Caco-2 (cell line): ENCODE measurements at regions of chr1 and their contacts with region 1.

Region 1: GRCh38 chr1:178310685-178311105 is 186.1 kb downstream of the CLEC20A start:
- DNase-seq: peak in 1 of 2 experiments; percentile 68
- H3K4me3 ChIP-seq: no peak overlapping the region
- H3K4me3 Mint-ChIP-seq: no peak overlapping the region
- H3K27ac Mint-ChIP-seq: peak overlapping the region; percentile 79
- H3K4me1 ChIP-seq: no peaks in the 10 kb centered on the region
- H3K4me1 Mint-ChIP-seq: peaks cover 28% of the 10 kb centered on the region
- H3K27me3 ChIP-seq: no peaks in the 10 kb centered on the region
- H3K27me3 Mint-ChIP-seq: no peaks in the 10 kb centered on the region
- CTCF ChIP-seq: peak; percentile 67 to 75

Region 2: GRCh38 chr1:178344513-178345082 is 33.9 kb after region 1 on chr1:
- CTCF ChIA-PET with region 1: interaction called, 9 read pairs
- POLR2A ChIA-PET with region 1: no interaction called
- intact Hi-C with region 1: loop called (anchors 2 kb)
- DNase-seq: peak in 1 of 2 experiments; percentile 19
- H3K4me3 ChIP-seq: no peak overlapping the region
- H3K4me3 Mint-ChIP-seq: no peak overlapping the region
- H3K27ac Mint-ChIP-seq: peak overlapping the region; percentile 79
- H3K4me1 ChIP-seq: peaks cover 30% of the 10 kb centered on the region
- H3K4me1 Mint-ChIP-seq: peaks cover 35% of the 10 kb centered on the region
- H3K27me3 ChIP-seq: no peaks in the 10 kb centered on the region
- H3K27me3 Mint-ChIP-seq: no peaks in the 10 kb centered on the region
- CTCF ChIP-seq: peak; percentile 25 to 29

Region 3: GRCh38 chr1:178354816-178355215 is 44.1 kb after region 1 on chr1:
- CTCF ChIA-PET with region 1: no interaction called
- POLR2A ChIA-PET with region 1: no interaction called
- intact Hi-C with region 1: no loop called
- DNase-seq: no peak
- H3K4me3 ChIP-seq: no peak overlapping the region
- H3K4me3 Mint-ChIP-seq: no peak overlapping the region
- H3K27ac Mint-ChIP-seq: no peak overlapping the region
- H3K4me1 ChIP-seq: no peaks in the 10 kb centered on the region; the same call in 1 of the 2 replicates
- H3K4me1 Mint-ChIP-seq: peaks cover 6% of the 10 kb centered on the region
- H3K27me3 ChIP-seq: no peaks in the 10 kb centered on the region
- H3K27me3 Mint-ChIP-seq: no peaks in the 10 kb centered on the region
- CTCF ChIP-seq: no peak

Region 4: GRCh38 chr1:178371235-178371634 is 60.5 kb after region 1 on chr1:
- CTCF ChIA-PET with region 1: no interaction called
- POLR2A ChIA-PET with region 1: no interaction called
- intact Hi-C with region 1: no loop called
- DNase-seq: no peak
- H3K4me3 ChIP-seq: no peak overlapping the region
- H3K4me3 Mint-ChIP-seq: no peak overlapping the region
- H3K27ac Mint-ChIP-seq: no peak overlapping the region
- H3K4me1 ChIP-seq: peaks cover 8% of the 10 kb centered on the region; the same call in 1 of the 2 replicates
- H3K4me1 Mint-ChIP-seq: no peaks in the 10 kb centered on the region
- H3K27me3 ChIP-seq: no peaks in the 10 kb centered on the region
- H3K27me3 Mint-ChIP-seq: no peaks in the 10 kb centered on the region
- CTCF ChIP-seq: no peak

Region 5: DNA sequence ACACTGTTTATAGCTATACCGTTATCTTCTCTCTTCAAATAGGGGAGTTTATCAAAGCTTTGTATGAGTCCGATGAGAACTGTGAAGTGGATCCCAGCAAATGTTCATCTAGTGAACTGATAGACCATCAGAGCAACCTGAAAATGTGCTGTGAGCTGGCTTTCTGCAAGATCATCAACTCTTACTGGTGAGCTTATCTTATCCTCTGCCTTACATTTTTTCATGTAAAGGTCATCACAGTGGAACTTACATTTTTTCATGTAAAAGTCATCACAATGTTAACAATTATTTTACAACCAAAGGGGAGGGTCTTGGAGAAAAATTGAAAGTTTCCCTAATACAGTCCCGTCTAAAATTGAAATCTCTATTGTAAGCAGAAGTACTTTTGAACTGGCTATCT is 140.8 kb after region 1 on chr1:
- CTCF ChIA-PET with region 1: no interaction called
- POLR2A ChIA-PET with region 1: no interaction called
- intact Hi-C with region 1: loop called (anchors 5 kb)
- DNase-seq: peak in 1 of 2 experiments; percentile 4
- H3K4me3 ChIP-seq: no peak overlapping the region
- H3K4me3 Mint-ChIP-seq: peak overlapping the region; percentile 33
- H3K27ac Mint-ChIP-seq: peak overlapping the region; percentile 43
- H3K4me1 ChIP-seq: peaks cover 40% of the 10 kb centered on the region
- H3K4me1 Mint-ChIP-seq: peaks cover 35% of the 10 kb centered on the region
- H3K27me3 ChIP-seq: no peaks in the 10 kb centered on the region
- H3K27me3 Mint-ChIP-seq: no peaks in the 10 kb centered on the region
- CTCF ChIP-seq: no peak

Region 6: GRCh38 chr1:178501705-178502329 is 191.1 kb after region 1 on chr1:
- CTCF ChIA-PET with region 1: interaction called, 20 read pairs
- POLR2A ChIA-PET with region 1: no interaction called
- intact Hi-C with region 1: loop called (anchors 2 kb)
- DNase-seq: peak; percentile 75 to 86
- H3K4me3 ChIP-seq: no peak overlapping the region
- H3K4me3 Mint-ChIP-seq: no peak overlapping the region
- H3K27ac Mint-ChIP-seq: no peak overlapping the region
- H3K4me1 ChIP-seq: peaks cover 8% of the 10 kb centered on the region
- H3K4me1 Mint-ChIP-seq: peaks cover 9% of the 10 kb centered on the region
- H3K27me3 ChIP-seq: no peaks in the 10 kb centered on the region
- H3K27me3 Mint-ChIP-seq: no peaks in the 10 kb centered on the region
- CTCF ChIP-seq: peak; percentile 88 to 95

Region 7: DNA sequence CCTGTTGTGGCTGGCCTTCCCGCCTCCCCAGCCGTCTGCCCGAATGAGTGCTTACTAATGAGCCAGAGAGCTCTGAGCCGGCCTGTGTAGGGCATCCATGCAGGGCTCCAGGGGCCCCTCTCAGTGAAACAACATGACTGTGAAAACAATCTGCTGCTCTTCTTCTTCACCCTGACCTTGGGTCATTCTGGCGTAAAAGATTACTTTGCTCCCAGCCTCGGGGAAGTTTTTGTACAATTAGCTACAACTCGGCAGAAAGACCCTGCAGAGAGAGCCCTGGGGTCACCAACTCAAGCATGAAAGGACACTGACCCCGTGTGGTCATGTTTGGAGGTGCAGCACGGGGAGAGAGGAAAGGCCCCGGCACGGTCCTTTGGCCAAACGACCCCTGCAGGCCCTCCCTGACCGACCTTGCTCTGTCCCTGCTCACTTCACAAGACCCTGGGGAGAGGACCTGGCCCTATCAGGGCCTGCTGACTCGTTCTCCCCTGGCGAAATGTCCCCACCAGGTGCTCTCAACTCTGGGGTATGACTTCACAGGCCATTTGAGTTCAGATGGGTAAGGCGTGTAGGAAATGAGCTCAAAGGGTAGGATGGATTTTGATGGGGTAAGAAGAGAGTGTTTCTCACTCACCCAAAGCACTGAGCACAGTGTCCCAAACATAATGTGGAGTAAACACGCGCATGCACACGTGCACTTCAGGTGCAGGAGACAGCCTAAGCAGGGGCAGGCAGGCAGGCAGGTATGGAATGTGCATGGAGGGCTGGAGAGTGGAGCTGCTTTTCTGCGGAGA is 692.1 kb after region 1 on chr1:
- CTCF ChIA-PET with region 1: interaction called, 9 read pairs
- POLR2A ChIA-PET with region 1: no interaction called
- intact Hi-C with region 1: loop called (anchors 5 kb)
- DNase-seq: peak; percentile 83 to 86
- H3K4me3 ChIP-seq: no peak overlapping the region
- H3K4me3 Mint-ChIP-seq: peak overlapping the region; percentile 28
- H3K27ac Mint-ChIP-seq: peak overlapping the region; percentile 77
- H3K4me1 ChIP-seq: peaks cover 9% of the 10 kb centered on the region
- H3K4me1 Mint-ChIP-seq: peaks cover 7% of the 10 kb centered on the region
- H3K27me3 ChIP-seq: no peaks in the 10 kb centered on the region
- H3K27me3 Mint-ChIP-seq: no peaks in the 10 kb centered on the region
- CTCF ChIP-seq: peak; percentile 95 to 98